Left cardiac atrium (tissue), 4 donors: ENCODE measurements at regions of chr14 and their contacts with region 1.

Region 1: DNA sequence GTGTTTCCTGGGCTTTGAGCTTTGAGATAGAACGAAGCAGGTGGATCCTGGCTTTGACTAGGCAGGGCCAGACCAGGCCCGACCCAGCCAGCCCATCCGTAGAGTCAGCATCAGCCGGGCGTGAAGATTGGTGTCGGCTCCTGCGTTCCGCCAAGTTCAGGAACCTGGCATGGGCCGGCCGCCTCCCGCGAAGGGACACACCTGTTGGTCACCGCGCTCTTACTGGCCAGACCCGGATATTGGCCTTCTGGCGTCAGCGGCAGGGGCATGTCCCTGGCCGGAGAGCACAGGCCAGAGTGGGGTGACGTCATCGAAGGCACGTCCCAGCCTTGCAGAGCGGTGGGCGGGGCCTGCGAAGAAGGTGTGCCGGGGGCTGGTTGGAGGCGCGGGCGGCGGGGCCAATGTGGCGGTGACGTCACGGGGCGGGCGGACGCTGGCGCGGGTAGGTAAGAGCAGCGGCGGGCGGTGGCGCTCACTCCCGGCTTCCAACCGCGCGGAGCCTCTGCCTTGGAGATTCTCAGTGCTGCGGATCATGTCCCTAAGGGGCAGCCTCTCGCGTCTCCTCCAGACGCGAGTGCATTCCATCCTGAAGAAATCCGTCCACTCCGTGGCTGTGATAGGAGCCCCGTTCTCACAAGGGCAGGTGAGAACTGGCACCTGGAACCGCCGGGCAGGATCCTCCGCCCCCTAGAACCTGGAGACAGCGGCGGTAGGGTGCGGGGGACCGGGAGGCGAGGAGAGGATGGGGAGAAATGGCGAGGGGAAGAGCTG is at the start of gene ARG2:
- DNase-seq: peak; percentile 98
- ATAC-seq: peak; percentile 98 to 99
- total RNA-seq, gene ARG2: 0.38 to 1.2 TPM

Region 2: GRCh38 chr14:67666750-67667449 is 47.3 kb after region 1 on chr14:
- intact Hi-C with region 1: loop called in 1 of 2 experiments (anchors 5 kb)
- DNase-seq: no peak
- ATAC-seq: peak; percentile 81 to 82

Region 3: GRCh38 chr14:67695394-67695949 is 75.8 kb after region 1 on chr14 and contains the start of gene RDH11:
- intact Hi-C with region 1: loop called in 1 of 2 experiments (anchors 10 kb)
- DNase-seq: peak; percentile 90
- ATAC-seq: peak; percentile 99
- total RNA-seq, gene RDH11: 18.3 to 20.8 TPM

Region 4: DNA sequence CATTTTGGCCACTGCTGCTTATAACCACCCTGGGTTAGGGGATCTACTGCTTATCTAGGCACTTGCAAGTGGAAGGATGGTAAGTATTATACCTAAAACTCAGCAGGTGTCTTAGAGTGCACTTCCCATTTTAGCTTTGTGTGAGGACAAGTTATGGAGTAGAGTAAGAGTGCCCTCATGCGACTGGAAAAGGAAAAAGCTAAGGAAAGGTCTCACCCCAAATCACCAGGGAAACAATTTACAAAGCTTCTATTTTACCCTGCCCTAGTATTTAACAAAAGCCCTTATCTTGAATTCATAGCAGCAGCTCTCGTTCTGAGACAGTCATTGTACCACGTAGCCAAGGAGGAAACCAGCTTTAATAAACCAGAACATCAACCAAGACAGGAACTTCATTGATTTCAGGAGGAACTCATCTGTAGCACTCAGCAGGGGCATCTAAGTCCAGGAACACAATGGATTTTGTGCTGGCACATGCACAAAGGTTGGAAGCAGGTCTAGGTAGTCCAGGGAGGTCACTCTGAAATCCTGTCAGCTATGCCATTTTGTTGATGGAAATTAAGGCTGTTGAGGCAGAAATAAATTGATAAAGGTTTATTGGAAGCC is 85.0 kb after region 1 on chr14:
- intact Hi-C with region 1: loop called (anchors 1 to 10 kb)
- DNase-seq: no peak
- ATAC-seq: peak; percentile 53 to 83